Aorta (tissue), 5 donors: ENCODE measurements at regions of chr1 and their contacts with region 1.

Region 1: DNA sequence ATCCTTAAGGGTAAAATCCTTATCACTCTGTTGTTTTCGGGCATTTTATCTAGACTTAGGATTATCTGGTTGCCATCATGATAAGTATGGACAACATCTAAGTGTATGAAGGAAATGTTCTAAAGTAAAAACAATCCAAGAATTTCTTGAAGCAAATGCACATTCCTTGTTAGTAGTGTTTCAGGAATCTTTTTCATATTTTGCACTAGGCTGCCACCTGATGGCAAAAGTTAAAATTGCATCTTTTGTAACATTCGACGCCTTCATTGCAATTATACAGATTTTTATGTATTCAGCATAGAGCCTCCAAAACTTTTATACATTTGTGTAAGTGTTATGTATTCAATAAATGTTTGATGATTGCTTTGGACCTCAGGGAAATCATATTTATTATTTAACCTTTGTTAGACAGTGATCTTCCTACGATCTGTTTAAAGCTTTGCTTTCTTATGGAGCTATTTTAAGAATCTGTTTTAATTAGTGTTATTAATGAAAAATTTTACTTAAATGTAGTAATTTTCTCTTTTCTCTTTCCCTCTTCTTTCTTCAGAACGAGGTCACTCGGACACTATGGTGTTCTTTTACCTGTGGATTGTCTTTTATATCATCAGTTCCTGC is 49.4 kb upstream of the KIAA1614 start:
- DNase-seq: no peak
- ATAC-seq: no peak
- H3K4me3 ChIP-seq: no peak overlapping the region
- H3K27ac ChIP-seq: no peak overlapping the region
- H3K4me1 ChIP-seq: no peaks in the 10 kb centered on the region
- H3K27me3 ChIP-seq: no peaks in the 10 kb centered on the region

Region 2: DNA sequence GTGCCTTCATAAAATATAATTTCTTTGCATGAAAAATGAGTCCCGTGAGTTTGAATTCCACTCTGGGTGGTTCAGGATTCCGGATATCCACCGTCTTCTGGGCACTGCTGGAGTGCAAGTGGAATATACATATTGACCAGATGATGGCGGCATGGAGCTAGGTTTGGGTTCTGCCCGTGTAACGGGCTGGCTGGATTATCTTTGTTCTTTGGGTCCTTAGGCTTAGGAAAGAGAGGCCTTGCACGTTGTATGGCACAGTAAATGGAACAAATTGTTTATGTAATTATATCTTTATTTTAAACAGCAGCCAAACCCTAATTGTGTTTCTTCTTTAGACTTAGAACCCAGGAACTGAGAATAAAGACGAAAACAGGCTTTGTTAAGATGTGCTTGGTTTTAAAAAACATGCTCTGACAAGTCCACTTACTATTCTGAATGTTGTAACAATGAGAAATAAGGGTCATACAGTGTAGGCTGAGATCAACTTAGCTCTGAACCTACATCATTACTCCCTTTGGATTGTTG is 347.3 kb before region 1 on chr1:
- intact Hi-C with region 1: loop called (anchors 5 kb)
- DNase-seq: peak in 1 of 2 donors; percentile 61
- ATAC-seq: peak; percentile 96
- H3K4me3 ChIP-seq: no peak overlapping the region
- H3K27ac ChIP-seq: no peak overlapping the region
- H3K4me1 ChIP-seq: no peaks in the 10 kb centered on the region
- H3K27me3 ChIP-seq: no peaks in the 10 kb centered on the region